Tibial artery (tissue), 4 donors: ENCODE measurements at regions of chr10 and their contacts with region 1.

Region 1: DNA sequence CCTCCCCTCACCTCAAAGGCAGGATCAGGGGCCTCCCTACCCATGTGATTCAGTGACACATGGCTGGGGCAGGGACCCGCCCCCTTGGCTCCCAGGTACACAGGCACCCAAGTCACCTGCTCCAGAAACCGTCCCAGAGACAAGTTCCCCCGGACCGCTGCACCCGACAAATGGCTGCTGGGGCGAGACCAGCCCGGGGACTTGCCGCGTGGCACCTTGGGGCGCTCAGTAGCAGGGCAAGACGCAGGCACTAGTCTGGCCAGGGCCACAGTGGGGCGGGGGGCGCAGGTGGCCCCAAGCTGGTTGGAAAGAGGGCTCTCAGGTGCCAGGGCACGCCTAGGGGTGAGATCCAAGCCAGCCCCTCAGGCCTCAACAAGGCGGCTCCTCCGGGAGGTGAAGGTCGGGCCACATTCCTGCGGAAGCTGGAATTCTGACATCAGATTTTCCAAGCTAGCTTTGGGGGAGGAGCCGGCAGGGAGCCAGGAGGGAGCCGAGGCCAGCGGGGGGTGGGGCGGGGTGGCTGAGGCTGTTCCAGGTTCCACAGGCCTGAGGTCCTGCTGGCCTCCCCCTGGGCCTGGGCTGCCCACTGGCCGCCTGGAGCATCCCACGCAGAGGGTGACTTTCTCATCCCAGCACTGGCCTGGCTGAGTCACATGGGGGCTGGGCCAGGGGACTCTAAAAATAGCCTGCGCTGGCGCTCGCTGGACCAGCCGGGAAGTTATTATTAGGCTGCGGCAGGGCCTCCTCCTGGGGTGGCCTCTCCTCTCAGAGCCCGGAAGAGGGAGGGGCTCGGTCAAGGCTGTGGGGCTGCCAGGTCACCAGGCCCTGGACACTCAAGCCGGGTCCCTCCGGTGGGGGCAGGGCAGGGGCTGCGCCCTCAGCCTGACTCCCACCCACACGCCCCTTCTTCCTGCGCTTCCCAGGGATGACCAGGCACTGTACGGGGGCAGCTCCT is 20.5 kb upstream of the INPP5A start:
- DNase-seq: peak; percentile 94 to 99
- H3K4me3 ChIP-seq: peak overlapping the region; percentile 15 to 38
- H3K27ac ChIP-seq: peak overlapping the region; percentile 88 to 89
- H3K4me1 ChIP-seq: peaks cover 33 to 68% (median 57%) of the 10 kb centered on the region in 4 donors
- H3K27me3 ChIP-seq: no peaks in the 10 kb centered on the region
- CTCF ChIP-seq: no peak

Region 2: DNA sequence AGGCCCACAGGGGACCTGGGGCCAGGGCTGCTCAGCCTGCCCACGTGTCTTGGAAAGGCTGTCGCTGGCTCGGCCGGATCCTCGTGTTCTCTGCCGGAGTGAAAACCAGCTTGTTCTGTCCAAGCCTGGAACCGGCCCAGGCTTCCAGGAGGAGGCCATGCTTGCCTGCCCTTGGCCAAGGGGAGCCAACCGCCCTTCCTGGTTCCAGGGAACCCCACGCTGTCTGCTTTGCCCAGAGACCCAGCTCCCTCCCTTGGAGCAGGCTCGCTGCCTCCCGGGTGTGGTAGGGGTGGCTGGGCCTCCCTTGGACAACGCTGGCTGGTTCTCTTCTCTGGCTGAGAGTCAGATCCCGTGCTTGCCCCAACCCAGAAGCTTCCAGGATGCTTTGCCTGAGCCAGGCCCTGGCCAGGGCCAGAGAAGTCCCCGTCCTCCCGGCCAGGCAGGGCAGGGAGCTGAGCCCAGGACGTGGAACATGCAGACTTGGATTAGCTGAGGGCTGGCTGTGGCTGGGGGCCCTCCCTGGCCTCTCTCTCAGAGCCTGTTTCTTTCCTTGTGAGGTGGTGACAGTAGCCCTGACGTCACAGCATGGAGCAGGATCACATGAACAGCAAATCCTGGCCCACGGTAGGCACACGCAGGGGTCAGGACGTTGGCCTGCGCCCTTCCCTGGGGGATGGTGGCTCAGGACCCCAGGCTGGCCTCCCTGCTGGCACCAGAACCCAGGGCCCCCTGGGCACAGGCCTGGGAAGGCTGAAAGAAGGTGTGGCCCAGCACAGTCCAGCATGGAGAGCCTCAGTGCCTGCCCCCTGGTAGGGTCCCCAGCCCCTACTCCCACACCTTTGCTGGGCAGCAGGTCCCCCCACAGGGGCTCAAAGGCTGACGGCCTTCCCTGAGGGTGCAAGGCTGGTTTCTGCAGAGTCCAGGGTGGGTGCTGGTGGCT is 52.5 kb before region 1 on chr10:
- intact Hi-C with region 1: loop called (anchors 5 kb)
- DNase-seq: peak; percentile 93 to 98
- H3K4me3 ChIP-seq: peak overlapping the region; percentile 24 to 35
- H3K27ac ChIP-seq: peak overlapping the region; percentile 95 to 97
- H3K4me1 ChIP-seq: peaks cover 23 to 72% (median 62%) of the 10 kb centered on the region in 4 donors
- H3K27me3 ChIP-seq: no peaks in the 10 kb centered on the region
- CTCF ChIP-seq: peak in 1 of 2 experiments; percentile 2

Region 3: DNA sequence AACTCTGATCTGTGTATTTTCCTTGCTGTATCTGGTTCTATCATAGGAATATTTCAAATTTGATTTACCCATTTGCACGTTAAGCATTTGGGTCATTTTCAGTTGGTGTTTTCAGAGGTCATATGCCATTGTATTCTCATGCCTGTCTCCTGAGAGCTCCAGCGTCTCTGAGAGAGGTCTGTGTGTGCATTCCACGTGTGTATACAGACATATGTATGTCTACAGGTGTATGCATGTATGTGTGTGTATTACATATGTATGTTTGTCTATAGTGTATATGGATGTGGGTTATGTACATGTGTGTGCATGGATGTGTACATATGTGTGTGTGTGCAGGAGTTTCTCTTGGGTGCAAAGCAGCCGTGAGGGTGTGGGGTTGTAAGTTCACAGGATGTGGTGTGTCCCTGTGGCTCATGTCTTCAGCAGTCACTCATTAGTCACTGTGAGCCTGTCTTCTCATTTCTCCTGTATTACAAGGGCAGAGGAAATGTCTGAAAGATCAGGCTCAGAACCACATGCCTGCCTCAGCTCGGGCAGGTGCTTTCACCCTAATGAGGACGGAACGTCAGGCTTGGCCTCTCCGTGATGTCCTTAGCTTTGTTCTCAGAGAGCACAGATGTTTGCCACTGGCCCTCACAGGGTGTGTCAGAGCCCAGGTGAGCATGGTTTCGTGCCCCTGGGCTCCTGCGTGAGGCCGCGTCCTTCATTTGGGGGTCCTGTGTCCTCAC is 167.3 kb after region 1 on chr10:
- intact Hi-C with region 1: no loop called
- DNase-seq: peak; percentile 12 to 39
- H3K4me3 ChIP-seq: no peak overlapping the region
- H3K27ac ChIP-seq: no peak overlapping the region
- H3K4me1 ChIP-seq: peaks cover 0 to 8% (median 3%) of the 10 kb centered on the region in 4 donors
- H3K27me3 ChIP-seq: no peaks in the 10 kb centered on the region
- CTCF ChIP-seq: no peak